Sigmoid colon (tissue), 7 donors: ENCODE measurements at regions of chr18 and their contacts with region 1.

Region 1: DNA sequence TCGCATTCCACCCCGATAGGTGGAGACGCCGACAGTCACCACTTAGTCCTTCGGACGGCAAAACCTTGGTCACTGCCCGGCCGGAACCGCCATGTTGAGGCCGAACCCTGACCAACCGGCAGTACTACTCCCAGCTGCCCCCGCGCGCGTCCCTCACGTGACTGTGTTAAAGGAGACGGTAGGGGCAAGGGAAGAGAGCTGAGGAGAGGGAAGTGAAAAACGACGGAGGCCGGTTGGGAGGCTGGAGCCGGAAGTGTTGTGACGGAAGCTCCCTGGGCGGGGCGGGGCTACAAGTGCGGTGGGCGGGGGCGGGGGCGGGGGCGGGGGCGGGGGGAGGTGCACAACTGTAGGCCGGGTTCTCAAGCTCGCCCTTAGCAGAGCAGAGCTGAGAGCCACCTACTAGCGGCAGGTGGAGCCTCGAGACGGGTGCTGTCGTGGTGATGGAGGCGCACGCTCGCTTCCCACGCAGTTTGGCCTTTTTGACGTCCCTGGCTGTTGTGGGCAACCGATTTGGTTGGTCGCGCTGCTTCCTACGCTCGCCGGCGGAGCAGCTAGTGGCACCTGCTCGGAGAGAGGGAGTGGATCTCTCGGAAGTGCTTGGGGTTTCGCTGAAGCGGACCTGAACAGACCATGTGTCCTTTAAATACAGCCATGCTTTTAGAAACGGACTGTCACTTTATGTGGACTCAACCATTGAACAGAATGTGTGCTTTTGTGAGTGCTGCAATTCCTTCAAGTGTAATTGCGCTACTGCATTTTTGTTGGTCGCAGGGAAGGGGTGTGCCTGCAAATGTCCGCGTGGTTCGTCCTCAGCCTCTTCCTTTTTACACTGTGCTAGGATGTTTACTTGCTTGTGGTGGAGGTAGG is at the start of gene TRAPPC8:
- DNase-seq: peak; percentile 99
- H3K4me3 ChIP-seq: peak within 1 kb of the TSS; percentile 71 to 99 (median 73)
- H3K27ac ChIP-seq: peak within 1 kb of the TSS; percentile 84 to 98 (median 90)
- H3K4me1 ChIP-seq: peaks cover 0 to 46% (median 37%) of the 10 kb centered on the region in 4 donors
- H3K27me3 ChIP-seq: no peaks in the 10 kb centered on the region
- CTCF ChIP-seq: no peak
- EP300 ChIP-seq: peak in 1 of 4 donors; percentile 47
- POLR2A ChIP-seq: no peak
- total RNA-seq, gene TRAPPC8: 33.8 to 50.4 (median 41.5) TPM

Region 2: GRCh38 chr18:32461709-32462272 is 518.6 kb after region 1 on chr18:
- intact Hi-C with region 1: loop called (anchors 5 kb)
- DNase-seq: no peak
- H3K4me3 ChIP-seq: no peak overlapping the region
- H3K27ac ChIP-seq: no peak overlapping the region
- H3K4me1 ChIP-seq: peaks cover 0 to 36% (median 33%) of the 10 kb centered on the region in 4 donors
- H3K27me3 ChIP-seq: no peaks in the 10 kb centered on the region
- CTCF ChIP-seq: no peak
- EP300 ChIP-seq: no peak
- POLR2A ChIP-seq: no peak